CD8-positive, alpha-beta memory T cell (primary cell): ENCODE measurements at regions of chr17 and their contacts with region 1.

Region 1: GRCh38 chr17:4997302-4998026 is at the starts of genes INCA1 and KIF1C:
- DNase-seq: peak; percentile 84 to 93 (median 91)
- H3K4me3 ChIP-seq: peak within 1 kb of the TSS; percentile 61
- H3K4me3 Mint-ChIP-seq: peak within 1 kb of the TSS; percentile 80 to 88 (median 84)
- H3K27ac ChIP-seq: peak within 1 kb of the TSS; percentile 51
- H3K27ac Mint-ChIP-seq: peak within 1 kb of the TSS; percentile 75 to 95 (median 87)
- H3K4me1 ChIP-seq: peaks cover 21% of the 10 kb centered on the region
- H3K4me1 Mint-ChIP-seq: peaks cover 18 to 33% (median 26%) of the 10 kb centered on the region in 3 donors
- H3K27me3 ChIP-seq: no peaks in the 10 kb centered on the region
- H3K27me3 Mint-ChIP-seq: no peaks in the 10 kb centered on the region
- total RNA-seq, gene INCA1: 0.18 to 0.37 TPM
- total RNA-seq, gene KIF1C: 73.4 to 77.3 TPM

Region 2: DNA sequence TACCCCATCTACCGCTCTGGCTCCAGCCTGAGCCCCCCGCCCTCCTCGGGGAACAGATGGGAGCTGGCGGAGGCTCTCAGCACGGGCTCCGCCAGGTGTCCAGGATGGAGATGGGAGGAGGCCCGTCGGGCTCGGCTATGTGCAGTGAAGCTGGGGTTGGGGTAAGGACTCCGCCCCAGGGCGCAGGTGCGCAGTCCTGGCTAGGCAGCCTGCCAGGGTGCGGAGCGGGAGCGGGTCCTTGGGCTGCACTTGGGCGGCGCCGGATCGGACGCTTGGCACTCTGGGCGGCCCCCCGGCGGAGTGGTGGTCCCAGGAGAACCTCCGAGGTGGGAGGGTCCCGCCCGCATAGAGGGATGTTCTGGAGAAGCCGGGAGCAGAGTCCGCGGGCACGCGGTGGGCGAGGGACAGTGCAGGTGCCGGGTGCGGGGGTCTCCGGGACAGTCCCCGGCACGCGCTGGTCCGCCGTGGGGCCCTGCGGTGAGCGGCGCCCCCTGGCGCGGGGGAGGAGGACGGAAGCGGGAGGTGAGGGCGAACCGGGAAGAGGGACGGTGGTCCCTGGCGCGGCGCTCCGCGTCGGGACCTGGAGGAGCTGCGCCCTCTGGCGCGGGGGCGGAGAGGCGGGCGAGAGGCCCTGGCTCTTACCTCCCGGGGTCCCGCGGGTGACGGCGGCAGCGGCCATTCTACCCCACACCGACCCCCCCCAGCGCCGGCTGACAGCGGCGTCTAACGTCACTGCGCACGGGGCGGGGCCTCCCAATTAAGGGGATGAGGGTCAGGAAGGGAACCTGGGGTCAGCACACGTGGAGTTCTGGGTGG is 10.3 kb before region 1 on chr17 and contains the start of gene CAMTA2:
- CTCF ChIA-PET with region 1: interaction called, 7 read pairs
- POLR2A ChIA-PET with region 1: interaction called, 20 read pairs
- DNase-seq: peak; percentile 80 to 92 (median 87)
- H3K4me3 ChIP-seq: peak within 1 kb of the TSS; percentile 94
- H3K4me3 Mint-ChIP-seq: peak within 1 kb of the TSS; percentile 91 to 96 (median 93)
- H3K27ac ChIP-seq: peak within 1 kb of the TSS; percentile 88
- H3K27ac Mint-ChIP-seq: peak within 1 kb of the TSS; percentile 87 to 98 (median 95)
- H3K4me1 ChIP-seq: peaks cover 33% of the 10 kb centered on the region
- H3K4me1 Mint-ChIP-seq: peaks cover 31 to 46% (median 42%) of the 10 kb centered on the region in 3 donors
- H3K27me3 ChIP-seq: no peaks in the 10 kb centered on the region
- H3K27me3 Mint-ChIP-seq: peaks cover 0 to 1% of the 10 kb centered on the region in 2 donors
- total RNA-seq, gene CAMTA2: 85.6 to 90.6 TPM

Region 3: GRCh38 chr17:5011928-5012327 is 14.5 kb after region 1 on chr17:
- CTCF ChIA-PET with region 1: no interaction called
- POLR2A ChIA-PET with region 1: no interaction called
- DNase-seq: no peak
- H3K4me3 ChIP-seq: no peak overlapping the region
- H3K4me3 Mint-ChIP-seq: no peak overlapping the region
- H3K27ac ChIP-seq: no peak overlapping the region
- H3K27ac Mint-ChIP-seq: peak overlapping the region in 2 of 8 donors; percentile 63 to 70
- H3K4me1 ChIP-seq: no peaks in the 10 kb centered on the region
- H3K4me1 Mint-ChIP-seq: peaks cover 0 to 5% (median 0%) of the 10 kb centered on the region in 3 donors
- H3K27me3 ChIP-seq: no peaks in the 10 kb centered on the region
- H3K27me3 Mint-ChIP-seq: no peaks in the 10 kb centered on the region